Activated CD8-positive, alpha-beta memory T cell treated with anti-CD3 and anti-CD28 coated beads, Interleukin-2, amount 10 ng/mL, durations not matched to agents 7 days and 5 days (primary cell): ENCODE measurements at regions of chr6 and their contacts with region 1.

Region 1: DNA sequence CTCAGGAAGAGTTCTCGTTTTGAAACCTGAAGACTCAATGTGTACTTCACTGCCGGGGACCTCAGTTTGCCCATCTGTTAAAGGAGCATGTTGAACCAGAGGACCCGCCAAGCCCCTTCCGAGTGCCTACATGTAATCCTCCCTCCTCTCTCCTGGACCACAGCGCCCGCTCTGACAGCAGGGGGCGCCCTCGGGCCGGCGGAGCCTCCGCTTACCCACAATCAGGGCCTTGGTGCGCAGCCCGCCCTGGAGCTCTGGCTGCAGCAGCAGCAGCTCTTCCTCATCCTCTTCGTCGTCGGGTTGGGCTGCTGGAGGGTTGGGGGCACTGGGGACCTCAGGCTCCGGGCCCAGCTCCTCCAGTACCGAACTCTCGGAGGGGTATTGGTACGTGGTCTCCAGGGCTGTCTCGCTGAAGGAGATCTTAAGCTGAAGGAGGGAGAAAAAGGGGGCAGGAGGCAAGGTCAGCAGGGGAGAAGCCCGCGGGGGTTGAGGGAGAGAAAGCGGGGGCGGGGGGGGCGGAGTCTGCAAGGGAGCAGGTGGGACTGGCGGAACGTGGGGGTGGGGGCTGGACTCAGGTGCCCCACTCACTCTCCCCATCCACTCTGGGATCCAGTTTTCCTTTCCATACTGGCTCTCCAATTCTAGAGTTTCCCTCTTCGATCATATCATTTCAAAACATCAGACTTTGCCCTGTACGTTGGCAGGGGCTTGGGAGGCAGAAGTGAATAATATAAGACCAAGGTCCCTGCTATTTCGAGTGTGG is 6.3 kb upstream of the DHX16 start:
- DNase-seq: peak; percentile 94
- ATAC-seq: peak; percentile 56
- H3K4me3 Mint-ChIP-seq: peak overlapping the region; percentile 90
- H3K27ac Mint-ChIP-seq: peak overlapping the region; percentile 90
- H3K4me1 Mint-ChIP-seq: peaks cover 33% of the 10 kb centered on the region
- H3K27me3 Mint-ChIP-seq: no peaks in the 10 kb centered on the region

Region 2: GRCh38 chr6:30614843-30615218 is 64.3 kb before region 1 on chr6:
- CTCF ChIA-PET with region 1: interaction called, 14 read pairs
- DNase-seq: peak; percentile 94
- ATAC-seq: peak; percentile 59
- H3K4me3 Mint-ChIP-seq: peak overlapping the region; percentile 97
- H3K27ac Mint-ChIP-seq: peak overlapping the region; percentile 100
- H3K4me1 Mint-ChIP-seq: peaks cover 57% of the 10 kb centered on the region
- H3K27me3 Mint-ChIP-seq: peaks cover 3% of the 10 kb centered on the region